K562 (cell line): ENCODE measurements at regions of chr5 and their contacts with region 1.

Region 1: GRCh38 chr5:96743065-96743768 is 64.5 kb downstream of the ERAP1 start:
- DNase-seq: peak; percentile 55 to 80 (median 60)
- ATAC-seq: peak; percentile 69
- H3K4me3 ChIP-seq: peak overlapping the region; percentile 28; the same call in 1 of the 2 replicates
- H3K27ac ChIP-seq: peak overlapping the region; percentile 85
- H3K4me1 ChIP-seq: peaks cover 10 to 44% of the 10 kb centered on the region in 2 experiments
- H3K27me3 ChIP-seq: no peaks in the 10 kb centered on the region
- CTCF ChIP-seq: no peak; a peak in 1 of 6 replicates
- EP300 ChIP-seq: no peak
- POLR2A ChIP-seq: no peak; the same call in 1 of the 2 replicates
- RAD21 ChIP-seq: no peak

Region 2: DNA sequence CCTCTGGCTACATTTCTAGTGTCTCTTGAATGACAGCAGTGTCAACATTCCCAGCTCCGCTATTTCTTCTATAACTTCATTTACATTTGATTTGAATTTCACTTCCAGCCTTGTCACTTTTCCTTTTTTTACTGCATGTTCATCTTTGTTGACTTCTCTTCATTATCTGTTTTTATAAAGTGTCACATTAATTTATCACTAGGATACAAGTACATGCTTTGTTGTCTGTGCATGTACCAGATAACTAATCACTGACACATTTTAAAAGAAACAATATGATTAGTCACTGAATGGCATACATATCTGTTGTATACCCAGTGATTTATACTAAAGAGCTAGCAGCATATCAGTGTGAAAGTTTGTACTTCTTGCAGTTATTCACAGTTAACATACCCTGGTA is 1159.2 kb before region 1 on chr5:
- CTCF ChIA-PET with region 1: no interaction called
- POLR2A ChIA-PET with region 1: no interaction called
- in situ Hi-C with region 1: no loop called
- intact Hi-C with region 1: no loop called
- DNase-seq: no peak
- ATAC-seq: no peak
- H3K4me3 ChIP-seq: no peak overlapping the region
- H3K27ac ChIP-seq: no peak overlapping the region
- H3K4me1 ChIP-seq: no peaks in the 10 kb centered on the region
- H3K27me3 ChIP-seq: no peaks in the 10 kb centered on the region
- CTCF ChIP-seq: no peak
- EP300 ChIP-seq: no peak; the same call in 1 of the 2 replicates
- POLR2A ChIP-seq: no peak
- RAD21 ChIP-seq: no peak

Region 3: DNA sequence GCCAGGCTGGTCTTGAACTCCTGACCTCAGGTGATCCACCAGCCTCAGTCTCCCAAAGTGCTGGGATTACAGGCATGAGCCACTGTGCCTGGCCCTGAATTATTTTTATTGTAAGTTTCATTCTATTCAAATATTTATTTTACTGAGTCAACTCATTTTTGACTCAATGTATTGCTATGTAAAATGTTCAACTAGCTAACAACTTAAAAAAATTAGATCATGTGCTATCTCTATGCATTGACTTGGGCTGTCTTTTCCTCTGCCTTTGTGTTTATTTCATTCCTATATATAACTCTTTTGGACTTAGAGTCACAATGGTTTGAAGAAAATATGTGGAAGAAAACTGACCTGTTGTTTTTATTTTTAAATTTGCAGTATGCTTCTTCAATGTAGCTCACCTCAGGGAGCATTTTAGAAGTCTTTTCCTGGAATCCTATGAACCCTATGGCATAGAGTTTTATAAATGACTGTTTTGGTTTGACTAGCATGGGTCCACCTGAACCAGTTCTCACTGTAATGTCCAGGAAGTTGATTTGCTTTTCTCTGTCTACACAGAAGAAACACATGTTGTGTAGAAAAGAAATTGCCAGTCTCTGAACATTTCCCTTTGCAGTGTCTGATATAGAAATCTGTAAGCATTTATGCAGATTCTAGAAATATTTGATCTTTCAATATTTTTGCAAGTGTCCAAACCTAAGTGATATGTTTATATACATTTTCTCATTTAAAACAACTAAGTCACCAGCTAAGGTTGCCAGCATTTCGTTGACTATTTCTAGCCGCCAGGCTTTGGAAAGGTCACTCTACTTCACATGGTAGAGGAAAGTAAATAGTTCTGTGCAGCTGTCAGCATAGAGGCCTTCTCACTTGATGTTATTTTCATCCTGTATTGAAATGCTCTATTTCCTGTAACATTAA is 449.0 kb before region 1 on chr5:
- CTCF ChIA-PET with region 1: no interaction called
- POLR2A ChIA-PET with region 1: no interaction called
- in situ Hi-C with region 1: no loop called
- intact Hi-C with region 1: no loop called
- DNase-seq: no peak
- ATAC-seq: no peak
- H3K4me3 ChIP-seq: no peak overlapping the region
- H3K27ac ChIP-seq: no peak overlapping the region
- H3K4me1 ChIP-seq: no peaks in the 10 kb centered on the region
- H3K27me3 ChIP-seq: no peaks in the 10 kb centered on the region
- CTCF ChIP-seq: no peak
- EP300 ChIP-seq: no peak
- POLR2A ChIP-seq: no peak
- RAD21 ChIP-seq: no peak

Region 4: DNA sequence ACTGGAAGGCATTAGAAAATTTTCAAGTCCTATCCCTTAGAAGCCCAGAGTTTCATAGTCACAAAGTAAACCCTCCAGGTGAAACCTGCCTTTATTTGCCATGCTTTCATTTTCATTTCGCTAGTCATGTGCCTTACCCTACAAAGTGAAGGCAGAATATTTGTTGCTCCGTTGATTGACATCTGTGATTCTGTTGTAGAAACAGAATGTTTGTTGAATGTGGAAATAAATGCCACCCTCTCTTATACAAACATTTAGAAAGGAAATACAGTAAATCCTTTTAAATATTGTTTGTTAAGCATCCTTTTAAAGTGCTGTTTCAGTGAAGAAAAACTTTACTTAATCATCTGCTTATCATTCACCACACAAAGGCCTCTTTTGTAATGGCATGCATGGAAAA is 115.4 kb before region 1 on chr5:
- CTCF ChIA-PET with region 1: no interaction called
- POLR2A ChIA-PET with region 1: no interaction called
- in situ Hi-C with region 1: no loop called
- intact Hi-C with region 1: no loop called
- DNase-seq: no peak
- ATAC-seq: no peak
- H3K4me3 ChIP-seq: no peak overlapping the region
- H3K27ac ChIP-seq: no peak overlapping the region
- H3K4me1 ChIP-seq: no peaks in the 10 kb centered on the region
- H3K27me3 ChIP-seq: peaks cover 3 to 9% of the 10 kb centered on the region in 2 experiments; a peak in 2 of 5 replicates
- CTCF ChIP-seq: no peak
- EP300 ChIP-seq: no peak
- POLR2A ChIP-seq: no peak
- RAD21 ChIP-seq: no peak

Region 5: DNA sequence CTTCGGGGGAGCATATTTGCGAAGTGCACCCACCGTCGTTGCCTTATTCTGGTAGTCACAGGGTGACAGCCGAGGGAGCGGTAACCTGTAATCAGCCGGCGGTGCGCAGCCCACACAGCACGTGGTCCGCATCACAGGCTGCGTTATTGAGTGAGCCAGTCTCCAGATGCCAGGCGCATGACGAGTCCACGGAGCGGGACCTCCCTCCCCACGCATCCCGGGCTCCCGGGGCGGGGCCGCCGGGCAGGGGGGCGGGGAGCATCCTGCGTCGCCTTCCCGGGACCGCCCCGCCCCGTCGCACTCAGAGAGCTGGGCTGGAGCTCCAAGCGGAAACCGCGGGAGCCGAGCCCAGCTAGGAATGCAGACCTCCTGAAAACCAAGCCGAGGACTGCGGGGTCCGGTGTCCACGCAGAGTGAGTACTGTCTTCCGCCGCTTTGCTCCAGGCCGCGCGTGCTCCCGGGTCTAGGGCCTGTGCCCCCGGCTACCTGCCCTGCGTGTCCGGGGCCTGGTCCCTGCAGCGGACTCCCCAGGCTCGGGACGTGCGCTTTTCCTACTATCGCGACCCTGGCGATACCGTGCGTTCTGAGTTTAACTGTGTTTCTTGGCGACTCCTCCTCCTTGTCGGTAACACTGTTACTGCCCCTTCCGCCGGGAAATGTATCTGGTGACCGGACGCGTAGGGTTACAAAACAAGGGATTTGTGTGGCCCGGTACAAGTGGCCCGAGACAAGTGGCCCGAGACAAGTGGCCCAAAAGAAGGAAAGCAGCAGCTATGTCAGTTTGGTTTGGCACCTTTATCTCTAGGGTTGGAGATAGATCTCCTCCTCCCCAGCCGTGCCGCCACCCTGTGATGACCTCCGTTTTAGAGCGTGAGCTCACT is 40.5 kb before region 1 on chr5:
- CTCF ChIA-PET with region 1: no interaction called
- POLR2A ChIA-PET with region 1: no interaction called
- in situ Hi-C with region 1: no loop called
- intact Hi-C with region 1: loop called (anchors 1 kb)
- DNase-seq: peak; percentile 91 to 96 (median 94)
- ATAC-seq: peak; percentile 88
- H3K4me3 ChIP-seq: peak overlapping the region; percentile 72
- H3K27ac ChIP-seq: peak overlapping the region; percentile 90
- H3K4me1 ChIP-seq: peaks cover 18 to 35% of the 10 kb centered on the region in 2 experiments
- H3K27me3 ChIP-seq: no peaks in the 10 kb centered on the region
- CTCF ChIP-seq: no peak
- EP300 ChIP-seq: no peak
- POLR2A ChIP-seq: peak; percentile 83
- RAD21 ChIP-seq: no peak

Region 6: GRCh38 chr5:96714951-96715451 is 28.2 kb before region 1 on chr5:
- CTCF ChIA-PET with region 1: no interaction called
- POLR2A ChIA-PET with region 1: no interaction called
- in situ Hi-C with region 1: no loop called
- intact Hi-C with region 1: loop called (anchors 2 kb)
- DNase-seq: peak in 3 of 4 experiments; percentile 28 to 54 (median 33)
- ATAC-seq: peak; percentile 77
- H3K4me3 ChIP-seq: no peak overlapping the region
- H3K27ac ChIP-seq: peak overlapping the region; percentile 37; the same call in 2 of the 3 replicates
- H3K4me1 ChIP-seq: peaks cover 0 to 35% of the 10 kb centered on the region in 2 experiments; a peak in 4 of 5 replicates
- H3K27me3 ChIP-seq: no peaks in the 10 kb centered on the region
- CTCF ChIP-seq: no peak
- EP300 ChIP-seq: peak; percentile 63
- POLR2A ChIP-seq: no peak
- RAD21 ChIP-seq: no peak

Region 7: DNA sequence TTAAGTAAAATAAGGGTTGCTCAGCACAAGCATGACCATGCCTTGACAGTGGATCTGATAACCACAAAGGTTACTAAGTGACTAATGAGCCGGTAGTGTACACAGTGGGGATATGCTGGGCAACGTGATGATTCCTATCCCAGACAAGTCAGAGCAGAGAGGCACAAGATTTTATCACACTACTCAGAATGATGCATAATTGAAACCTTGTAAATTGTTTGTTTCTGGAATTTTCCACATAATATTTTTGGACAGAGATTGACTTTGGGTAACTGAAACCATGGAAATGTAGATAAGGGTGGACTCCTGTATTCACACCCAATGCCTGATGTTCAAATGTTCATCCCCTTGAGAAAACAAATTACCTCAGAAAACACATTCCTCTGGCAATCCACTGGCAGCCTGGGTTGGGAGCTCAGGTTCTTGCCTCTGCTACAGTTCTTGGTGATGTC is 80.7 kb after region 1 on chr5:
- CTCF ChIA-PET with region 1: no interaction called
- POLR2A ChIA-PET with region 1: no interaction called
- in situ Hi-C with region 1: no loop called
- intact Hi-C with region 1: no loop called
- DNase-seq: no peak
- ATAC-seq: peak; percentile 58; the same call in 1 of the 3 replicates
- H3K4me3 ChIP-seq: no peak overlapping the region
- H3K27ac ChIP-seq: no peak overlapping the region
- H3K4me1 ChIP-seq: no peaks in the 10 kb centered on the region
- H3K27me3 ChIP-seq: no peaks in the 10 kb centered on the region
- CTCF ChIP-seq: no peak
- EP300 ChIP-seq: no peak
- POLR2A ChIP-seq: no peak
- RAD21 ChIP-seq: no peak